Pancreas (tissue), 10 donors: ENCODE measurements at regions of chr14 and their contacts with region 1.

Region 1: GRCh38 chr14:87896393-87897380 is 96.3 kb downstream of the GALC start:
- DNase-seq: no peak
- ATAC-seq: peak in 3 of 4 donors; percentile 75 to 83 (median 81)
- H3K4me3 ChIP-seq: no peak overlapping the region
- H3K27ac ChIP-seq: no peak overlapping the region
- H3K4me1 ChIP-seq: no peaks in the 10 kb centered on the region
- H3K27me3 ChIP-seq: no peaks in the 10 kb centered on the region
- CTCF ChIP-seq: peak; percentile 33 to 68 (median 60)

Region 2: DNA sequence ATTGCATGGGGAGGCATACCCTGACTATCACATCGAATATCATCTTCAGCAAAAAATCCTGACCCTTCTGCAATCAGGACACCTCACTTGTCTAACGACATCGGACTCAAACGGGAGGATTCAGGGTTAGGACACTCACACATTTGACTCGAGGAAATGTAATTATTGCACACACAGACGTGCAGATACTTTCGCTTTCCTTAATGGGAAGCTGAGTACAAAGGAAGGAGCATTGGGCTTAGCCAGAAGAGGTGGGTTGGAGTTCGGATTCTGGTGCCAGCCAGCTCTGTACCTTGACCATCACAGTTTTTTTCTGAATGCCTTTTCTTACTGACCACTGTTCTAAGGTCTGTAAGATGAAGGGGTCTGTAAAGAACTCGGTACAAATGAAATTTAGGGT is 164.1 kb before region 1 on chr14:
- intact Hi-C with region 1: loop called in 1 of 3 experiments (anchors 10 kb)
- DNase-seq: no peak
- ATAC-seq: no peak
- H3K4me3 ChIP-seq: no peak overlapping the region
- H3K27ac ChIP-seq: no peak overlapping the region
- H3K4me1 ChIP-seq: no peaks in the 10 kb centered on the region
- H3K27me3 ChIP-seq: no peaks in the 10 kb centered on the region
- CTCF ChIP-seq: no peak

Region 3: DNA sequence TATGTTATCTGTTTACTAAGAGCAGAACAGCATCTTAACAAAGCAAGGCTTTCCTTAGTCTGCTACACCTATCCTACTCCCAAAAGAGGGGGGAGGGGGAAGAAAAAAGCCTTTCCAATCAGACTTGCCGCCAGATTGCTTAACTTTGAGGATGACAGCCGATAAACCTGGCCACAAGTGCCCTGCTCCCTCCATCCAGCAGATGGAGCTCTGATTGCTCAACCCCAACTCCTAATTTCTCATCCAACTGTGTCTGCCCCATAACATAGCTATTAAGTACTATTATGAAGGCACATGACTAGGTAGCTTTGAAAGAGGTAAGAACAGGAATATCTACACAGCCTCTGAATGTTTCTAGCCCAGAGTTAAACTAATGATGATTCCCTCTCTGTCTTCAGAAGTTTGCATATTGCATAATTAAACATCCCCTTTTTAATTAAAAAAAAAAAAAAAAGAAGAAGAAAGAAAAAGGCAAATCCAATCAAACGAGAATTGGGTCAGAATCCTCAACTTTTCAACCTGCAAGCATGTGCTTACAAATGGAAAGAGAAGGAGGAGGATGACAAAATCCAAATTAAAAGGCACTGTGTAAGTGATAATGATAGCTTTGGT is 151.1 kb before region 1 on chr14:
- intact Hi-C with region 1: loop called in 1 of 3 experiments (anchors 10 kb)
- DNase-seq: peak in 1 of 6 donors; percentile 37
- ATAC-seq: peak in 3 of 4 donors; percentile 61 to 79 (median 78)
- H3K4me3 ChIP-seq: no peak overlapping the region
- H3K27ac ChIP-seq: no peak overlapping the region
- H3K4me1 ChIP-seq: no peaks in the 10 kb centered on the region
- H3K27me3 ChIP-seq: no peaks in the 10 kb centered on the region
- CTCF ChIP-seq: peak; percentile 35 to 58 (median 48)

Region 4: GRCh38 chr14:87805315-87805723 is 91.4 kb before region 1 on chr14:
- intact Hi-C with region 1: loop called in 1 of 3 experiments (anchors 10 kb)
- DNase-seq: peak in 5 of 6 donors; percentile 12 to 81 (median 40)
- ATAC-seq: peak; percentile 74 to 91 (median 82)
- H3K4me3 ChIP-seq: no peak overlapping the region
- H3K27ac ChIP-seq: no peak overlapping the region
- H3K4me1 ChIP-seq: no peaks in the 10 kb centered on the region
- H3K27me3 ChIP-seq: no peaks in the 10 kb centered on the region
- CTCF ChIP-seq: peak; percentile 39 to 49 (median 45)